ENCODE measurements at regions of chr15 and their contacts with region 1.

Region 1: GRCh38 chr15:98142572-98142971 is 182.1 kb downstream of the ARRDC4 start:
- DNase-seq: no peak
- H3K4me3 ChIP-seq: no peak overlapping the region
- H3K27ac ChIP-seq: no peak overlapping the region
- H3K4me1 ChIP-seq: no peaks in the 10 kb centered on the region; a peak in 1 of 7 replicates
- H3K27me3 ChIP-seq: 0 out of 7 replicates have a peak, but pooled peaks cover 0 to 3% (median 0%) of the 10 kb centered on the region in 4 experiments
- CTCF ChIP-seq: peak; percentile 68 to 74 (median 72)
- EP300 ChIP-seq: no peak
- POLR2A ChIP-seq: no peak
- RAD21 ChIP-seq: peak; percentile 78 to 81

Region 2: GRCh38 chr15:98169551-98169950 is 27.0 kb after region 1 on chr15:
- CTCF ChIA-PET with region 1: interaction called, 24 read pairs
- POLR2A ChIA-PET with region 1: no interaction called
- DNase-seq: no peak
- H3K4me3 ChIP-seq: no peak overlapping the region
- H3K27ac ChIP-seq: no peak overlapping the region
- H3K4me1 ChIP-seq: peaks cover 2 to 10% (median 9%) of the 10 kb centered on the region in 4 experiments; a peak in 4 of 7 replicates
- H3K27me3 ChIP-seq: no peaks in the 10 kb centered on the region
- CTCF ChIP-seq: no peak
- EP300 ChIP-seq: no peak
- POLR2A ChIP-seq: no peak
- RAD21 ChIP-seq: no peak

Region 3: DNA sequence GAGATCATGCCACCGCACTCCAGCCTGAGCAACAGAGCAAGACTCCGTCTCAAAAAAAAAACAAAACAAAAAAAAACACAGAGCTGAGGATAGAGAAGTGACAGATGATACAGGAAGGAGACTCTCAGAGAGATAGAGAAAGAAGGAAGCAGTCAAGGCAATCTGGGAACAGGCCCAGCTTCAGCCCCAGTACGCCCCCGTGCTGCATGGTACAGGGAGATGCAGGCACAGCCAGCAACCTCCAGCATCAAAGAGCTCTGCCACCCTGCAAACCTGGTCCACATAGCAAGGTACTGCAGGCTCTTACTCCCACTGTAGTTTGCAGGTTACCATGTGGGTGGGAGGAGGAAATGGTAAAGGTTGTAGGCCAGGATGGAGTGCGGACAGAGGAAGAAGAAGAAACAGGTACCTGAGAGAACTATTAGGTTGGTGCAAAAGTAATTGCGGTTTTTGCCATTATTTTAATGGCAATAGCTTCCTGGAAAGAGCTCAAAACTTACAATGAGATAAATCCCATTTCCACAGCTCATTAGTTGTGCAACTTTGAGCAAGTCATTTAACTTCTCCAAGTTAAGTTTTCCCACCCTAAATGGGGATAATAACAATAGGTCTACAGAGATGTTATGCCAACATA is 70.9 kb after region 1 on chr15:
- CTCF ChIA-PET with region 1: no interaction called
- POLR2A ChIA-PET with region 1: no interaction called
- DNase-seq: no peak
- H3K4me3 ChIP-seq: no peak overlapping the region
- H3K27ac ChIP-seq: no peak overlapping the region
- H3K4me1 ChIP-seq: no peaks in the 10 kb centered on the region
- H3K27me3 ChIP-seq: no peaks in the 10 kb centered on the region
- CTCF ChIP-seq: no peak
- EP300 ChIP-seq: no peak
- POLR2A ChIP-seq: no peak
- RAD21 ChIP-seq: no peak